ENCODE measurements at regions of chr9 and their contacts with region 1.

Region 1: GRCh38 chr9:35954942-35955546 is 2.9 kb downstream of the OR2S2 start:
- DNase-seq: no peak
- ATAC-seq: peak; percentile 80

Region 2: DNA sequence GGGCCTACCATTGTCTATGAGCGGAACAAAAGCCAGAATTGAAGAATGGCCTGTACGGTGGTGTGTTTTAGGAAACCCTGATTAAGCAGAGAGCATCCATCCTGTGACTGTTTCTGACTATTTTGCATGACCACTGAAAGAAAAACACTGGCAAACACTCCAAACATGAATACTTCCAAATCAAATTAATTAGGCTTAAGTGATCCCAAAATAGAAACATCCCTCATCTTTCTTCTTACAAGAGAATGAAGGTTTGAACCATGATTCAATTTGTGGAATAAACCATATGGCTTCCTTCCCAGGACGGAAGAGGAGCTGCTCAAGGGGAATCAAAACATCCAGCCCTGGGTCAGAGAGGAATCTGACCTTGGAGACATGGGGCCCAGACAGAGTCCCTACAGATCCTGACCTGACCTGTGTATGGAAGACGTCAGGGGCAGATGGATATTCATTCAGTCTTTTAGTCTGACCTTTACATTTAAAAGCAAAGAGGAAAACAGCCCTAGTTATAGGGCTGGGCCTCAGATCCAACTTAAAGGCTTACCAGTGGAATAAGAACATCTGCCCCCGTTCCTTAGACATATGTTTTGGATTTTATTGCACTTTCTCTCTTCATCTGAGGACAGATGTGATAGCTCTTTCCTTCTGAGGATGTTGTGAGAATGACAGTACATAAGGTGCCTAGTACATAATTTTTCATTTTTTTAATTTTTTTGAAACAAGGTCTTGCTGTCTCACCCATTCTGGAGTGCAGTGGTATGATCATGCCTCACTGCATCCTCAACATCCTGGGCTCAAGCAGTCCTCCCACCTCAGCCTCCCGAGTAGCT is 64.1 kb after region 1 on chr9:
- intact Hi-C with region 1: loop called (anchors 5 kb)
- DNase-seq: no peak
- ATAC-seq: no peak

Measured in left ventricle myocardium superior (tissue), 1 donor.